Breast epithelium (tissue), 4 donors: ENCODE measurements at regions of chr19 and their contacts with region 1.

Region 1: DNA sequence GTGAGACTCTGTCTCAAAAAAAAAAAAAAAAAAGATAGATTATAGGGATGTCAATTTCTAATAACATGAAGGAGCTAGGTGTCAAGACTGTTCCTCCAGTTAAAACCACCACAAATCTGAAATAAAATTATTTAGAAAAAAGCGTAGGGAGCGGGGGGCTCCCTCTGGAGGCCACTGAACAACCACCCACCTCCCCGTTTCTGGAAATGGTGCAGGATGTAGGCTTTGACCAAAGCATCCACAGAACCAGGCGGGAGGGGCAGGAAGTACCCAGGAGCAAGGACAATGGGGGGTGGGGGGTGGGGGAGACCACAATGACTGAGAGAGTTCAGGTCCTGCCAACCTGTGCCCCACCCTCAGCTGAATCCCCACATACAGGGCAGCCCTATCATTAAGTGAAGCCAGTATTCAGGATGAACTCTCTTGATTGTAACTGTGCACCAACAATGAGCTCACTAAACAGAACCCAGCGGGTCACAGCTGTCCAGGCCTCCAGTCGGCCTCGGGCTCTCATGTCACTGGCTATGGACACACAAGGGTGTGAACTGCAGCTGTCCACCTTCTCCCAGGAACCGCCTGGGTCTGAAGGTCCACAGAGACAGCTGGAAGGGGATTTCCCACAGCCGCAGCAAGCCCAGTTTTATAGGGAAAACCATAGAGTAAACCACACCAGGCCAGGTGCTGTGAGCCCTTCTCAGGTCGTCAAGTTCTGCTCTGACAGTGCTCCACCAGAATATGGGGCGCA is 6.6 kb downstream of the ZSCAN18 start:
- DNase-seq: no peak
- H3K4me3 ChIP-seq: no peak overlapping the region
- H3K27ac ChIP-seq: no peak overlapping the region
- H3K4me1 ChIP-seq: no peaks in the 10 kb centered on the region
- H3K27me3 ChIP-seq: no peaks in the 10 kb centered on the region
- CTCF ChIP-seq: no peak
- POLR2A ChIP-seq: no peak

Region 2: DNA sequence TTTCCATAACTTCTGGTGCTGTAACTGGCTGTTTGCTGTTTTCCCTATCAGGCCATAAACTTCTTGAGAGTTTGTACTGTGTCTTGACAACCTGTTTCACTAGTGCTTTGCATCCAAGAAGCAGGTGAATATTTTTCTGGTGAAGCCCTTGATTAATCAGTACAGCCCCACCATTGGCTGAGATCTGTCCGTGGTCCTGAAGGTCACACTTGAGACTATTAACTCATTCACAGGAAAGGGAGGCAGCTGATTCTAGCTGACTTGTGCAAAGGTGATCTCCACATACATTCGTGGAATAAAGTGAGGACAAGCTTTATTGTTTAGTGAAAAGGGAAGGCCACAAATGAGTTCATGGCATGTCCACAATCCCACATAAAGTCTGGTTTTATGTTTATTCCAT is 1358.4 kb before region 1 on chr19:
- intact Hi-C with region 1: loop called (anchors 5 kb)
- DNase-seq: no peak
- H3K4me3 ChIP-seq: no peak overlapping the region
- H3K27ac ChIP-seq: no peak overlapping the region
- H3K4me1 ChIP-seq: no peaks in the 10 kb centered on the region
- H3K27me3 ChIP-seq: no peaks in the 10 kb centered on the region
- CTCF ChIP-seq: no peak
- POLR2A ChIP-seq: no peak

Region 3: DNA sequence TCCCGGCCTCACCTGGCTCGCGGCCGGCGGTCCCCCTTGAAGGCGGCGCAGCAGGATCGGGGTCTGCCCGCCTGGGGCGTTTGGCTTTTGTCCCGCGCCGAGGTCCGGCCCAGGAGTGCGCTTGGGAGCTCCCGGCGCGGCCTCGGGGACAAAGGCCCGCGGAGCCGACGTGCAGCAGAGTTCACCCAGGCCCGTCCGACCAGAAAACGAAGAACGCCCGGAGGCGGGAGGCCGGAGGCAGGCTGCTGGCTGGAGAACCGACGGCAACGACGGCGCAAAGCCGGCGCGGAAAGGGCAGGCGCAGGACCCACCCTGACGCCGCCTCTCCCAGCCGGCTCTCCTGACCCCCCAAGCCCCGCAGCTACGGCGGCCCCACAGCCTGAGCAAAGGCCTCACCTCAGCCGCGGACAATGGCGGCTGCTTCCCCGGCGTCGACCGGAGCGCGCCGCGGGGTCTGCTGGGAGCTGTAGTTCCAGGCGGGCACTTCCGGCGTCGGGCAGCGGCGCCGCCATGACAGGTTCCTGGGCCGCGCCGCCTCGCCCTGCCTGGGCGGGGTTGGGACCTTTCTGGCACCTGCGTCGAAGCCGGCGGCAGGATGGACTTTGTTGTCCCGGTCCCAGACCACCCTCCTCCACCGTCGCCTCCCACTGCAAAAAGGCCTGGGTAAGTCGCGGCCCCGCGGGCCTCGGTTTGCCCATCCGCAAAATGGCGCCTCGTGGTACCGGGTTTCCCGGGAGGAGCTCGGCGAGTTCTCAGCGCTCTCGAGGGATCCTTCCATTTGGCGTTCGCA is 88.8 kb before region 1 on chr19 and contains the start of gene ZNF606:
- intact Hi-C with region 1: no loop called
- DNase-seq: peak; percentile 77 to 83
- H3K4me3 ChIP-seq: peak within 1 kb of the TSS; percentile 76 to 96 (median 96)
- H3K27ac ChIP-seq: peak within 1 kb of the TSS; percentile 95 to 97
- H3K4me1 ChIP-seq: peaks cover 0 to 8% of the 10 kb centered on the region in 2 donors
- H3K27me3 ChIP-seq: no peaks in the 10 kb centered on the region
- CTCF ChIP-seq: no peak
- POLR2A ChIP-seq: peak; percentile 71
- total RNA-seq, gene ZNF606: 12.0 to 46.5 (median 21.6) TPM

Region 4: GRCh38 chr19:58067240-58067912 is 24.0 kb before region 1 on chr19:
- intact Hi-C with region 1: no loop called
- DNase-seq: no peak
- H3K4me3 ChIP-seq: peak overlapping the region in 1 of 3 donors; percentile 25
- H3K27ac ChIP-seq: no peak overlapping the region
- H3K4me1 ChIP-seq: no peaks in the 10 kb centered on the region
- H3K27me3 ChIP-seq: no peaks in the 10 kb centered on the region
- CTCF ChIP-seq: no peak
- POLR2A ChIP-seq: no peak